Naive thymus-derived CD4-positive, alpha-beta T cell (primary cell): ENCODE measurements at regions of chr2 and their contacts with region 1.

Region 1: GRCh38 chr2:181499231-181499630 is 42.0 kb downstream of the ITGA4 start:
- DNase-seq: no peak
- ATAC-seq: no peak
- H3K4me3 ChIP-seq: no peak overlapping the region
- H3K4me3 Mint-ChIP-seq: no peak overlapping the region
- H3K27ac ChIP-seq: no peak overlapping the region
- H3K27ac Mint-ChIP-seq: peak overlapping the region in 1 of 9 donors; percentile 37
- H3K4me1 ChIP-seq: no peaks in the 10 kb centered on the region
- H3K4me1 Mint-ChIP-seq: peaks cover 0 to 6% (median 0%) of the 10 kb centered on the region in 7 donors
- H3K27me3 ChIP-seq: no peaks in the 10 kb centered on the region
- H3K27me3 Mint-ChIP-seq: no peaks in the 10 kb centered on the region

Region 2: GRCh38 chr2:181517685-181518301 is 18.6 kb after region 1 on chr2:
- CTCF ChIA-PET with region 1: no interaction called
- POLR2A ChIA-PET with region 1: no interaction called
- intact Hi-C with region 1: loop called in 1 of 2 experiments (anchors 2 kb)
- DNase-seq: peak in 1 of 9 donors; percentile 11
- ATAC-seq: peak; percentile 44
- H3K4me3 ChIP-seq: no peak overlapping the region
- H3K4me3 Mint-ChIP-seq: peak overlapping the region in 5 of 10 donors; percentile 23 to 67 (median 45)
- H3K27ac ChIP-seq: no peak overlapping the region
- H3K27ac Mint-ChIP-seq: peak overlapping the region in 8 of 9 donors; percentile 13 to 83 (median 62)
- H3K4me1 ChIP-seq: peaks cover 24 to 32% of the 10 kb centered on the region in 2 donors
- H3K4me1 Mint-ChIP-seq: peaks cover 20 to 55% (median 50%) of the 10 kb centered on the region in 7 donors
- H3K27me3 ChIP-seq: no peaks in the 10 kb centered on the region
- H3K27me3 Mint-ChIP-seq: no peaks in the 10 kb centered on the region

Region 3: GRCh38 chr2:181536730-181537129 is 37.5 kb after region 1 on chr2:
- CTCF ChIA-PET with region 1: no interaction called
- POLR2A ChIA-PET with region 1: no interaction called
- intact Hi-C with region 1: loop called in 1 of 2 experiments (anchors 5 kb)
- DNase-seq: no peak
- ATAC-seq: no peak
- H3K4me3 ChIP-seq: no peak overlapping the region
- H3K4me3 Mint-ChIP-seq: no peak overlapping the region
- H3K27ac ChIP-seq: no peak overlapping the region
- H3K27ac Mint-ChIP-seq: no peak overlapping the region
- H3K4me1 ChIP-seq: no peaks in the 10 kb centered on the region
- H3K4me1 Mint-ChIP-seq: peaks cover 0 to 5% (median 0%) of the 10 kb centered on the region in 7 donors
- H3K27me3 ChIP-seq: no peaks in the 10 kb centered on the region
- H3K27me3 Mint-ChIP-seq: no peaks in the 10 kb centered on the region